T-cell (primary cell): ENCODE measurements at regions of chr19 and their contacts with region 1.

Region 1: DNA sequence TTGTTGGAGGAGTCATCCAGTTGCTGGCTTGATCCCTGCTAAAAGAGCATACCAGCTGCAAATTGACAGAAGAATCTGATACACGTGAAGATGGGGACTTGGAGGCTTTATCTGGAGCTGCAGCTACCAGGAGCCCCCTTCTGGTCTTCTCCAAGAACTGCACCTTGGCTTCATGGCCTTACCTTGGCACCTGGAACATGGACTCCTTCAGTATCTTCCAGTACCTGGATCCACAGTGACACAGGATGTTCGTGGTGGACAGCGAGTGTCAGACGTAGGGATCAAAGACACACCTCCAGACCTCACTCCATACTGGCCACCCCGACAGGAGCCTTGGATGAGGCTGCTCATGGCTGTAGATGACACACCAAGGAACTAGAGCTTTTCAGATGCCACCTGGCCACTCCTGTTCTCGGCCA is 9.9 kb upstream of the ACSBG2 start:
- DNase-seq: peak; percentile 29 to 85 (median 56)
- ATAC-seq: peak; percentile 83 to 87 (median 86)
- H3K4me3 ChIP-seq: no peak overlapping the region
- H3K4me3 Mint-ChIP-seq: no peak overlapping the region
- H3K27ac ChIP-seq: no peak overlapping the region
- H3K27ac Mint-ChIP-seq: no peak overlapping the region
- H3K4me1 ChIP-seq: no peaks in the 10 kb centered on the region
- H3K4me1 Mint-ChIP-seq: no peaks in the 10 kb centered on the region
- H3K27me3 ChIP-seq: peaks cover 0 to 5% of the 10 kb centered on the region in 2 experiments
- H3K27me3 Mint-ChIP-seq: no peaks in the 10 kb centered on the region

Region 2: GRCh38 chr19:5642204-5642603 is 483.4 kb before region 1 on chr19:
- CTCF ChIA-PET with region 1: no interaction called
- POLR2A ChIA-PET with region 1: no interaction called
- DNase-seq: no peak
- ATAC-seq: no peak
- H3K4me3 ChIP-seq: no peak overlapping the region
- H3K4me3 Mint-ChIP-seq: no peak overlapping the region
- H3K27ac ChIP-seq: no peak overlapping the region
- H3K27ac Mint-ChIP-seq: no peak overlapping the region
- H3K4me1 ChIP-seq: peaks cover 0 to 8% of the 10 kb centered on the region in 2 experiments
- H3K4me1 Mint-ChIP-seq: peaks cover 36 to 56% (median 43%) of the 10 kb centered on the region in 3 donors
- H3K27me3 ChIP-seq: no peaks in the 10 kb centered on the region
- H3K27me3 Mint-ChIP-seq: no peaks in the 10 kb centered on the region

Region 3: DNA sequence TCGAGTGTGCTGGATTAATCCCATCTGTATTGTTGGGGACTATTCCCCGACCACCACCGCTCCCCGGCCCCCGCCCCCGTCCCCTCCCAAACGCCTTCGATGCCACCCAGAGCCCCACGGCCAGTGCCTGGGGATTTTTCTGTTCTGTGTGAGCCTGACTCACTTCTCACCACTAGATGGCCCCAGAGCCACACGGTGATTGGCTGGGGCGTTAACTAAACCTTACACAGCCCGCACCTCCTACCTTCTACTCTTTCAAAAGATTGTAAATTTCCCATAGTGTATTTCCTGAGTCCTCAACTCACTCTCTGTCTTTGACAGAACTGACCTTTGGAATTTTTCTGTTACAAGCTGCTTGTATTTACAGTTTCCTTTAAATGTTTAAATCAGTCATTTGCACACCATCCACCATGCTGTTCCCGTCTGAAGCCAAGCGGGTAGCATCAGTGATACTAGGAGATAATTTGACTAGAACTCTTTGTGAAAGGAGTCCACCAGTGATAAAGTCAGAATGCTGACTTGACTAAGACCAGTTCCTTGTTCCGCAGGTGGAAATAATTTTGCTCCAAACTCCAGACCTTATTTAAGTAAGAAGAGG is 76.7 kb before region 1 on chr19:
- CTCF ChIA-PET with region 1: interaction called, 4 to 28 read pairs
- POLR2A ChIA-PET with region 1: no interaction called
- DNase-seq: peak; percentile 53 to 90 (median 71)
- ATAC-seq: peak; percentile 93 to 100 (median 98)
- H3K4me3 ChIP-seq: no peak overlapping the region
- H3K4me3 Mint-ChIP-seq: no peak overlapping the region
- H3K27ac ChIP-seq: no peak overlapping the region
- H3K27ac Mint-ChIP-seq: no peak overlapping the region
- H3K4me1 ChIP-seq: peaks cover 0 to 3% of the 10 kb centered on the region in 2 experiments
- H3K4me1 Mint-ChIP-seq: peaks cover 4 to 6% (median 5%) of the 10 kb centered on the region in 3 donors
- H3K27me3 ChIP-seq: peaks cover 0 to 6% of the 10 kb centered on the region in 2 experiments
- H3K27me3 Mint-ChIP-seq: no peaks in the 10 kb centered on the region